ENCODE measurements at regions of chr3 and their contacts with region 1.

Region 1: GRCh38 chr3:132641837-132642538 is 17.6 kb downstream of the ACAD11 start:
- DNase-seq: peak in 1 of 2 experiments; percentile 34
- H3K4me3 ChIP-seq: no peak overlapping the region
- H3K27ac ChIP-seq: no peak overlapping the region
- H3K4me1 ChIP-seq: peaks cover 10% of the 10 kb centered on the region; the same call in 1 of the 2 replicates
- H3K27me3 ChIP-seq: no peaks in the 10 kb centered on the region
- CTCF ChIP-seq: peak; percentile 82

Region 2: GRCh38 chr3:132253262-132253878 is 388.6 kb before region 1 on chr3:
- CTCF ChIA-PET with region 1: no interaction called
- POLR2A ChIA-PET with region 1: no interaction called
- intact Hi-C with region 1: loop called (anchors 10 kb)
- DNase-seq: peak; percentile 16 to 56
- H3K4me3 ChIP-seq: no peak overlapping the region
- H3K27ac ChIP-seq: no peak overlapping the region
- H3K4me1 ChIP-seq: peaks cover 34% of the 10 kb centered on the region
- H3K27me3 ChIP-seq: no peaks in the 10 kb centered on the region
- CTCF ChIP-seq: peak; percentile 83

Region 3: GRCh38 chr3:132352541-132353143 is 289.3 kb before region 1 on chr3:
- CTCF ChIA-PET with region 1: interaction called, 7 read pairs
- POLR2A ChIA-PET with region 1: interaction called, 4 read pairs
- intact Hi-C with region 1: loop called (anchors 2 kb)
- DNase-seq: peak; percentile 53 to 55
- H3K4me3 ChIP-seq: no peak overlapping the region
- H3K27ac ChIP-seq: no peak overlapping the region
- H3K4me1 ChIP-seq: peaks cover 7% of the 10 kb centered on the region
- H3K27me3 ChIP-seq: no peaks in the 10 kb centered on the region
- CTCF ChIP-seq: peak; percentile 90

Region 4: GRCh38 chr3:132535575-132536441 is 106.2 kb before region 1 on chr3:
- CTCF ChIA-PET with region 1: interaction called, 11 read pairs
- POLR2A ChIA-PET with region 1: no interaction called
- intact Hi-C with region 1: loop called (anchors 1 kb)
- DNase-seq: peak; percentile 36 to 46
- H3K4me3 ChIP-seq: no peak overlapping the region
- H3K27ac ChIP-seq: no peak overlapping the region
- H3K4me1 ChIP-seq: no peaks in the 10 kb centered on the region
- H3K27me3 ChIP-seq: no peaks in the 10 kb centered on the region
- CTCF ChIP-seq: peak; percentile 84